ENCODE measurements at regions of chrX and their contacts with region 1.

Region 1: GRCh38 chrX:48021026-48021900 is 14.5 kb downstream of the SPACA5 start:
- DNase-seq: peak; percentile 74 to 85 (median 78)
- ATAC-seq: peak; percentile 81 to 89 (median 88)
- H3K4me3 ChIP-seq: peak overlapping the region; percentile 3 to 88 (median 59)
- H3K27ac ChIP-seq: peak overlapping the region; percentile 78 to 99 (median 88)
- H3K4me1 ChIP-seq: peaks cover 0 to 9% (median 1%) of the 10 kb centered on the region in 12 donors
- H3K27me3 ChIP-seq: no peaks in the 10 kb centered on the region
- CTCF ChIP-seq: no peak
- POLR2A ChIP-seq: no peak

Region 2: GRCh38 chrX:47193475-47194193 is 827.6 kb before region 1 on chrX and contains the start of gene UBA1:
- intact Hi-C with region 1: loop called in 1 of 10 experiments (anchors 10 kb)
- DNase-seq: peak; percentile 90 to 97 (median 93)
- ATAC-seq: peak; percentile 84 to 95 (median 94)
- H3K4me3 ChIP-seq: peak within 1 kb of the TSS; percentile 61 to 99 (median 83)
- H3K27ac ChIP-seq: peak within 1 kb of the TSS; percentile 84 to 98 (median 96)
- H3K4me1 ChIP-seq: peaks cover 0 to 68% (median 36%) of the 10 kb centered on the region in 12 donors
- H3K27me3 ChIP-seq: peaks cover 0 to 18% (median 0%) of the 10 kb centered on the region in 9 donors
- CTCF ChIP-seq: peak; percentile 60 to 93 (median 70)
- POLR2A ChIP-seq: peak in 1 of 2 donors; percentile 79
- total RNA-seq, gene UBA1: 116 to 171 (median 130) TPM

Region 3: GRCh38 chrX:47644557-47645091 is 376.6 kb before region 1 on chrX:
- intact Hi-C with region 1: loop called in 2 of 10 experiments (anchors 5 to 10 kb)
- DNase-seq: no peak
- ATAC-seq: peak; percentile 60 to 81 (median 66)
- H3K4me3 ChIP-seq: no peak overlapping the region
- H3K27ac ChIP-seq: peak overlapping the region in 1 of 12 donors; percentile 10
- H3K4me1 ChIP-seq: peaks cover 0 to 17% (median 7%) of the 10 kb centered on the region in 12 donors
- H3K27me3 ChIP-seq: peaks cover 0 to 4% (median 0%) of the 10 kb centered on the region in 9 donors
- CTCF ChIP-seq: peak in 10 of 12 donors; percentile 10 to 45 (median 32)
- POLR2A ChIP-seq: no peak

Region 4: GRCh38 chrX:47836164-47837072 is 184.8 kb before region 1 on chrX and contains the start of gene ZNF81:
- intact Hi-C with region 1: loop called in 8 of 10 experiments (anchors 5 to 10 kb)
- DNase-seq: peak; percentile 94 to 97 (median 96)
- ATAC-seq: peak; percentile 99 to 100 (median 100)
- H3K4me3 ChIP-seq: peak within 1 kb of the TSS; percentile 26 to 74 (median 59)
- H3K27ac ChIP-seq: peak within 1 kb of the TSS in 11 of 12 donors; percentile 59 to 83 (median 74)
- H3K4me1 ChIP-seq: peaks cover 0 to 15% (median 0%) of the 10 kb centered on the region in 12 donors
- H3K27me3 ChIP-seq: peaks cover 0 to 4% (median 0%) of the 10 kb centered on the region in 9 donors
- CTCF ChIP-seq: no peak
- POLR2A ChIP-seq: peak in 1 of 2 donors; percentile 43
- total RNA-seq, gene ZNF81: 2.9 to 8.9 (median 6.9) TPM

Region 5: DNA sequence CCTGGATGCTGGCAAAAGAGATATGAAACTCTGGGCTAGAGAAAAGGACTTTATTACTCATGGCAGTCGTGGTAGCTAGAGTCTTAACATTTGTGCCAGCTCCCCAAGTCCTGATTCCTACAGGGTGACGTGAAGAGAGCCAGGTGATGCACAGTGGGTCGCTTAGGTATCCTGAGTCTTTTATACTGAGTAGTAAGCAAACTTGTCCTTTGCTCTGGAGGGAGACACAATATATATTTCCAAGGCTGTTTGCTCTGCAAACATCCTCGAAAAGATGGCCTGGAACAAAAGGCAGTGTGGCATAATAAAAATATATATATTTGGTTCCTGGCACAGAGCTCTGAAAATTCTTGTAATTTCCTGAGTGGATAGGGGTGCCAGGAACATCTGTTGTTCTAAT is 161.6 kb before region 1 on chrX:
- intact Hi-C with region 1: loop called in 7 of 10 experiments (anchors 2 to 5 kb)
- DNase-seq: no peak
- ATAC-seq: no peak
- H3K4me3 ChIP-seq: no peak overlapping the region
- H3K27ac ChIP-seq: no peak overlapping the region
- H3K4me1 ChIP-seq: peaks cover 0 to 2% (median 0%) of the 10 kb centered on the region in 12 donors
- H3K27me3 ChIP-seq: peaks cover 0 to 10% (median 0%) of the 10 kb centered on the region in 9 donors
- CTCF ChIP-seq: no peak
- POLR2A ChIP-seq: no peak

Region 6: GRCh38 chrX:48083212-48083611 is 61.9 kb after region 1 on chrX:
- intact Hi-C with region 1: no loop called
- DNase-seq: peak in 2 of 5 donors; percentile 20 to 23
- ATAC-seq: peak; percentile 47 to 81 (median 72)
- H3K4me3 ChIP-seq: no peak overlapping the region
- H3K27ac ChIP-seq: no peak overlapping the region
- H3K4me1 ChIP-seq: no peaks in the 10 kb centered on the region
- H3K27me3 ChIP-seq: peaks cover 0 to 4% (median 0%) of the 10 kb centered on the region in 9 donors
- CTCF ChIP-seq: peak; percentile 39 to 61 (median 48)
- POLR2A ChIP-seq: no peak

Region 7: DNA sequence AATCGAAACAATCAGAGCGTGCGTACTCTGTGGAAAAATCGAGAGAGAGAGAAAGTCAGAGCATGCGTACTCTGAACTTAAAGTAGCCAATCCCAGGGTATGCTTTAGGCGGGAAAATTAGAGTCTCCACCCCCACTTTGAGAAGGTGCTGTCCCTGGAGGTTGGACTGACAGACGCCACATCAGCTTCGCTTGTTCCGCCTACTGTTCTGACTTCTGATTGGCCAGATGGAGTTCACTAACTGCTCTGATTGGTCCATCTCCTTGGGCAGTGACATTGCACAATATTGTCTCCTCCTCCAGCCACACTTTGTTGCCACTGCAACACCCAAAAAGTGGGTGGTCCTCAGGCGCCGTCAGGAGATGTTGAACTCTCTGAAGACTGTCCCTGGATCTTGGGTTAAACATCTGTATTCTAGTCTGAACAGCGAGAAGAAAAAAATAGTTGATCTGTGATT is 175.5 kb after region 1 on chrX and contains the start of gene SSX5:
- intact Hi-C with region 1: no loop called
- DNase-seq: no peak
- ATAC-seq: no peak
- H3K4me3 ChIP-seq: no peak within 1 kb of the TSS
- H3K27ac ChIP-seq: no peak within 1 kb of the TSS
- H3K4me1 ChIP-seq: no peaks in the 10 kb centered on the region
- H3K27me3 ChIP-seq: peaks cover 0 to 4% (median 0%) of the 10 kb centered on the region in 9 donors
- CTCF ChIP-seq: no peak
- POLR2A ChIP-seq: no peak
- total RNA-seq, gene SSX5: not detected